Activated CD8-positive, alpha-beta memory T cell treated with anti-CD3 and anti-CD28 coated beads, Interleukin-2, amount 10 ng/mL, durations not matched to agents 7 days and 5 days (primary cell): ENCODE measurements at regions of chr16 and their contacts with region 1.

Region 1: GRCh38 chr16:50024684-50025536 is at the start of gene CNEP1R1:
- DNase-seq: peak; percentile 97
- ATAC-seq: peak; percentile 99
- H3K4me3 Mint-ChIP-seq: peak within 1 kb of the TSS; percentile 96
- H3K27ac Mint-ChIP-seq: peak within 1 kb of the TSS; percentile 90
- H3K4me1 Mint-ChIP-seq: peaks cover 20% of the 10 kb centered on the region
- H3K27me3 Mint-ChIP-seq: peaks cover 2% of the 10 kb centered on the region
- total RNA-seq, gene CNEP1R1: 27.7 to 28.4 TPM

Region 2: DNA sequence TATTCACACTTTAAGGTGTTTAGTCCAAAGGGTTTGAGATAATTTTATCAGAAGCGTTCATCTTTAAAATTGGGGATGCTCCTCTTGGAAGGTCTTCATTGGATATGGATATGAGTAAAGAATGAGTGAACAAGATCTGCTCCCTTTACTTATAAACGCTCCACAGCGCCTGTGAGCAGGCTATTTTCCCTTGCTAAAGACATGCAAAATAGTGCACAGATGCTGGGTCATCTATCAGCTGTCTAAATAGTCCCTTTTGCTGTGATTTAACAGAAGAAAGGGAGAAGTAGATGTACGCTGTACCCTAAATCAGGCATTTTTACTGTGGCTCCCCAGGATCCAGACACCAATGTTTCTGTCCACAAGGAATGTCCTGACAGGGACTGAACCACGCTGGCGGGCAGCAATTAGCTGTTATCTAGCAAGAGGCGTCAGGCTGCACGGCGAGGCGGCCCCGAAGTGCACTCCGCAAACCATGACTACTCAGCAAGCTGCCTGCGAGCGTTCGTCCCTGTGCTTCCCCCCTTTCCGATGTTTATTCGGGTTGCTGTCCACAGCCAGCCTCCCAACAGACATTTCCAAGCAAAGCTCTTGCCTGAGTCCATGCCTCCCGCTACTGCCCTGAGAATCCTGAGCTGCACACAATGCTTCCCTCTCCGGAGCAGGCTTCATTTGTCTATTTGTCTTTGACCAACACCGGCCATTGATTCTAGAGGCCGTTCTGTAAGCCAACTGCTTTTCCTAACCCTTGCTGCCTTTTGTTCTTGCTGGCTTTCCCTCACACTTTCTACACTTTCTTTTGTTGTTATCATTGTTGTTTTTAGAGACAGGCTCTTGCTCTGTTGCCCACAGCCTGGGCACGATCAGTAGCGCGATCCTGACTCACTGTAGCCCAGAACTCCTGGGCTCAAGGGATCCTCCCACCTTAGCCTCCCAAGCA is 55.5 kb before region 1 on chr16:
- CTCF ChIA-PET with region 1: no interaction called
- DNase-seq: no peak
- ATAC-seq: no peak
- H3K4me3 Mint-ChIP-seq: no peak overlapping the region
- H3K27ac Mint-ChIP-seq: no peak overlapping the region
- H3K4me1 Mint-ChIP-seq: no peaks in the 10 kb centered on the region
- H3K27me3 Mint-ChIP-seq: peaks cover 63% of the 10 kb centered on the region

Region 3: GRCh38 chr16:50038756-50039529 is 14.0 kb after region 1 on chr16:
- CTCF ChIA-PET with region 1: interaction called, 55 read pairs
- DNase-seq: no peak
- ATAC-seq: no peak
- H3K4me3 Mint-ChIP-seq: no peak overlapping the region
- H3K27ac Mint-ChIP-seq: no peak overlapping the region
- H3K4me1 Mint-ChIP-seq: peaks cover 17% of the 10 kb centered on the region
- H3K27me3 Mint-ChIP-seq: peaks cover 7% of the 10 kb centered on the region

Region 4: GRCh38 chr16:50065624-50066481 is 40.9 kb after region 1 on chr16 and contains the start of gene HEATR3:
- CTCF ChIA-PET with region 1: interaction called, 104 read pairs
- DNase-seq: peak; percentile 96
- ATAC-seq: peak; percentile 91
- H3K4me3 Mint-ChIP-seq: peak within 1 kb of the TSS; percentile 97
- H3K27ac Mint-ChIP-seq: peak within 1 kb of the TSS; percentile 91
- H3K4me1 Mint-ChIP-seq: peaks cover 40% of the 10 kb centered on the region
- H3K27me3 Mint-ChIP-seq: no peaks in the 10 kb centered on the region
- total RNA-seq, gene HEATR3: 24.3 to 26.1 TPM

Region 5: DNA sequence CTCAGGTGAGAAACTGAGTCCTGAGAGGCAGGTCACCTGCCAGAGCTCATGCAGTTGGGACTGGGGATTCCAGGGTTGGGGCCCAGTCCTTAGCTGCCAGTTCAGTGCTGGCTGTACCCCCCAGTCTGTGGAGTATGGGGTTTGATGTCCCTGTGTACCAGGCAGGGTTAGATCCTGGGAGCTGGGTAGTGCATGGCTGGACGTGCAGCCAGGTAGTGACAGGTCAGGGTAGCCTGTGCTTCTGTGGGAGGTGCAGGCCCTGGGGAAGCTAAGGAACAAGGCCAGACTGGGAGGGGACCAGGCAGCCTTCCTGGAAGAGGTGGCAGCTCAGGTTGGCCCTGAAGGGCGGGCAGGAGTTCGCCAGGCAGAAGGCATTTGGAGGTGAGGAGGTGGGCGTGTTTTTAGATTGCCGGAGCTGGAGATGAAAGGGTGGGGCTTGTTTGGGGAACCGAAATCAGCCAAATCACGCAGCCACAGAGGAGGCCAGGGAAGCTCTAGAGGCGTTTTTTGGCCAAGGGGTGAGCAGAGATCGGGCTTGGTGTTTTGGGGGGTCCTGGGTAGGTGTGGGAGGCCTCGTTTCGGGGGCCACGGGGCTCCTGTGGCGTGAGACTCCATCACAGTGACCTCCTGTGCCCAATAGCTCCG is 248.9 kb after region 1 on chr16:
- CTCF ChIA-PET with region 1: interaction called, 20 read pairs
- DNase-seq: peak; percentile 74
- ATAC-seq: peak; percentile 48
- H3K4me3 Mint-ChIP-seq: peak overlapping the region; percentile 82
- H3K27ac Mint-ChIP-seq: peak overlapping the region; percentile 98
- H3K4me1 Mint-ChIP-seq: peaks cover 94% of the 10 kb centered on the region
- H3K27me3 Mint-ChIP-seq: no peaks in the 10 kb centered on the region

Region 6: DNA sequence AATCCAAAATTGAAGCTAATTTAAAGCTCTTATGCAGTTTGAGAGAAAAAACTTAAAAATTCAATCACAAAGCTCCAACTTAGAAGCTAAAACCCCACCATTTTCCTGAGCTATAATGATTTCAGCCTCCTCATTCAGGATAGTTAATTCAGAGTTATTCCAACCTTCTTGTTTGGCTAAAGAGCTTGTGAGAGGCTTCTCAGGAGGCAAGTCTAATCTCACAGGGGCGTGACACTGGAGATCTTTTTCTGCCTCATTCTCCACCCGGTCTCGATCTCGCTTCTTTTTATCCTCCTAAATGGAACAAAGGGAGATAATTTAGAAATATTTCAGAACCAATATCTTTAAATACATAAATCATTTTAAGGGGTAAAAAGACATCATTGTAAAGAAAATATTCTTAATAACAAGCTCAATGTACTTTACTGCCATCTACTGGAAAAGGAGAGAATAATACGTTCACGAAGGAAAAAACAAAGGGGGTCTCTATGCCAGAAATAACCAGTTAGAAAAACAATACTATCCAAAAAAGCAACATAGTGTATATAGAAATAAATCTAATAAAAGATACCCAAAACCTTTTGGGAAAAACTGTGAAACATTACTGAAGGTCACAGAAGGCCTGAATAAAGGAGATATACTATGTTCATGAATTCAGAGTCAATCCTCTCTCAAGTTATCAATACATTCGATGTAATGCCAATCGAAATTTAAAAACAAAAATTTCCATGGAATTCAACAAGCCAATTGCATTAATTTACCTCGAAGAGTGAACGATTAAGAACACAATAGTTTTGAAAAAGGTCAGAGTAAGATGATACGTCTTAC is 329.9 kb after region 1 on chr16:
- CTCF ChIA-PET with region 1: interaction called, 18 read pairs
- DNase-seq: no peak
- ATAC-seq: no peak
- H3K4me3 Mint-ChIP-seq: no peak overlapping the region
- H3K27ac Mint-ChIP-seq: no peak overlapping the region
- H3K4me1 Mint-ChIP-seq: peaks cover 11% of the 10 kb centered on the region
- H3K27me3 Mint-ChIP-seq: no peaks in the 10 kb centered on the region

Region 7: GRCh38 chr16:50747207-50747956 is 722.5 kb after region 1 on chr16:
- CTCF ChIA-PET with region 1: interaction called, 11 read pairs
- DNase-seq: peak; percentile 60
- ATAC-seq: peak; percentile 70
- H3K4me3 Mint-ChIP-seq: peak overlapping the region; percentile 72
- H3K27ac Mint-ChIP-seq: peak overlapping the region; percentile 92
- H3K4me1 Mint-ChIP-seq: peaks cover 62% of the 10 kb centered on the region
- H3K27me3 Mint-ChIP-seq: no peaks in the 10 kb centered on the region